ENCODE measurements at regions of chr7 and their contacts with region 1.

Region 1: GRCh38 chr7:25259587-25260243 is 31.4 kb upstream of the NPVF start:
- DNase-seq: peak in 4 of 5 donors; percentile 82 to 95 (median 86)
- H3K4me3 ChIP-seq: no peak overlapping the region
- H3K27ac ChIP-seq: no peak overlapping the region
- H3K4me1 ChIP-seq: peaks cover 0 to 4% (median 0%) of the 10 kb centered on the region in 3 donors
- H3K27me3 ChIP-seq: no peaks in the 10 kb centered on the region
- CTCF ChIP-seq: peak; percentile 87

Region 2: GRCh38 chr7:25565949-25566348 is 306.2 kb after region 1 on chr7:
- intact Hi-C with region 1: loop called (anchors 10 kb)
- DNase-seq: peak; percentile 68 to 88 (median 84)
- H3K4me3 ChIP-seq: no peak overlapping the region
- H3K27ac ChIP-seq: no peak overlapping the region
- H3K4me1 ChIP-seq: no peaks in the 10 kb centered on the region
- H3K27me3 ChIP-seq: no peaks in the 10 kb centered on the region
- CTCF ChIP-seq: peak; percentile 100

Region 3: GRCh38 chr7:25851332-25852210 is 591.9 kb after region 1 on chr7:
- intact Hi-C with region 1: loop called (anchors 10 kb)
- DNase-seq: peak; percentile 91 to 96 (median 95)
- H3K4me3 ChIP-seq: no peak overlapping the region
- H3K27ac ChIP-seq: peak overlapping the region; percentile 40 to 51
- H3K4me1 ChIP-seq: peaks cover 2 to 17% (median 8%) of the 10 kb centered on the region in 3 donors
- H3K27me3 ChIP-seq: no peaks in the 10 kb centered on the region
- CTCF ChIP-seq: peak; percentile 66

Measured in kidney (tissue), 22 donors.